Activated CD4-positive, alpha-beta T cell treated with anti-CD3 and anti-CD28 coated beads for 36 hours (primary cell): ENCODE measurements at regions of chrX and their contacts with region 1.

Region 1: GRCh38 chrX:109856974-109857373 is 123.9 kb upstream of the ACSL4 start:
- DNase-seq: peak; percentile 18
- ATAC-seq: no peak
- H3K4me3 Mint-ChIP-seq: no peak overlapping the region
- H3K27ac Mint-ChIP-seq: no peak overlapping the region
- H3K4me1 Mint-ChIP-seq: no peaks in the 10 kb centered on the region
- H3K27me3 Mint-ChIP-seq: no peaks in the 10 kb centered on the region

Region 2: DNA sequence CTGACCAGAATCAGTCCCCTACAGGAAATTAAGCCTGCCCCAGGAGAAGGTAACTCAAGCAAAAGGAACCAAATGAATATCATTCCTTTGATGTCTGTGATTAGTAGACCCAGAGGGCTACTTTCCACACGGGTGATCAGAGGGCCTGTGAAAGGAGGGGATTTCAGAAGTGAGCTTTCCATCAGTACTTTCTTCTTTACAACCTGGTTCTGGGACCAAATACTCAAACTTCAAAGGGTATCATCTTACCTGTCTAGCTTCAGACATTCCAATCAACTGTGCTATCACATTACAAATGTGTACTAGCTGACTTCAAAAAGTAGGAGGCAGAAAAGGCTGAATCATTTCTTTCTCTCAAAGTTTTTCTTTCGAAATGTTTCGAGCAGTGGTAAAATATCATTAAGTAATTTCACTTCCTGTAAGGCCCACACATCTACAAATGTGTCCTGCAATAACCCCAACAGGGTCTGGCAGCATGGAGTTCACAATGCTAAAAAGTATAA is 147.8 kb before region 1 on chrX:
- CTCF ChIA-PET with region 1: interaction called, 64 read pairs
- POLR2A ChIA-PET with region 1: no interaction called
- intact Hi-C with region 1: loop called (anchors 1 kb)
- DNase-seq: no peak
- ATAC-seq: peak; percentile 68
- H3K4me3 Mint-ChIP-seq: peak overlapping the region; percentile 43
- H3K27ac Mint-ChIP-seq: peak overlapping the region; percentile 84
- H3K4me1 Mint-ChIP-seq: peaks cover 72% of the 10 kb centered on the region
- H3K27me3 Mint-ChIP-seq: no peaks in the 10 kb centered on the region

Region 3: GRCh38 chrX:109720947-109721346 is 136.0 kb before region 1 on chrX:
- CTCF ChIA-PET with region 1: interaction called, 15 read pairs
- POLR2A ChIA-PET with region 1: no interaction called
- intact Hi-C with region 1: no loop called
- DNase-seq: no peak
- ATAC-seq: no peak
- H3K4me3 Mint-ChIP-seq: no peak overlapping the region
- H3K27ac Mint-ChIP-seq: no peak overlapping the region
- H3K4me1 Mint-ChIP-seq: peaks cover 28% of the 10 kb centered on the region
- H3K27me3 Mint-ChIP-seq: no peaks in the 10 kb centered on the region

Region 4: GRCh38 chrX:109840585-109840984 is 16.4 kb before region 1 on chrX:
- CTCF ChIA-PET with region 1: interaction called, 52 read pairs
- POLR2A ChIA-PET with region 1: no interaction called
- intact Hi-C with region 1: no loop called
- DNase-seq: peak; percentile 28
- ATAC-seq: peak; percentile 50
- H3K4me3 Mint-ChIP-seq: no peak overlapping the region
- H3K27ac Mint-ChIP-seq: no peak overlapping the region
- H3K4me1 Mint-ChIP-seq: peaks cover 12% of the 10 kb centered on the region
- H3K27me3 Mint-ChIP-seq: no peaks in the 10 kb centered on the region